Brain microvascular endothelial cell (primary cell): ENCODE measurements at regions of chr3 and their contacts with region 1.

Region 1: GRCh38 chr3:36868614-36869436 is 76.0 kb downstream of the TRANK1 start:
- DNase-seq: peak; percentile 61
- H3K4me3 ChIP-seq: no peak overlapping the region
- H3K27ac ChIP-seq: no peak overlapping the region
- H3K27me3 ChIP-seq: no peaks in the 10 kb centered on the region
- CTCF ChIP-seq: peak; percentile 84

Region 2: GRCh38 chr3:35932995-35933394 is 935.8 kb before region 1 on chr3:
- in situ Hi-C with region 1: no loop called
- DNase-seq: peak; percentile 97
- H3K4me3 ChIP-seq: no peak overlapping the region
- H3K27ac ChIP-seq: peak overlapping the region; percentile 70
- H3K27me3 ChIP-seq: no peaks in the 10 kb centered on the region
- CTCF ChIP-seq: no peak

Region 3: GRCh38 chr3:36729204-36730056 is 139.4 kb before region 1 on chr3:
- in situ Hi-C with region 1: loop called (anchors 25 kb)
- DNase-seq: peak; percentile 31
- H3K4me3 ChIP-seq: no peak overlapping the region
- H3K27ac ChIP-seq: no peak overlapping the region
- H3K27me3 ChIP-seq: no peaks in the 10 kb centered on the region
- CTCF ChIP-seq: peak; percentile 53